WTC11 (cell line): ENCODE measurements at regions of chr11 and their contacts with region 1.

Region 1: GRCh38 chr11:60913793-60914632 is at the start of gene TMEM109:
- DNase-seq: peak; percentile 85
- ATAC-seq: peak; percentile 71
- H3K4me3 Mint-ChIP-seq: peak within 1 kb of the TSS; percentile 94
- H3K27ac Mint-ChIP-seq: peak within 1 kb of the TSS; percentile 99
- H3K4me1 Mint-ChIP-seq: peaks cover 49% of the 10 kb centered on the region
- H3K27me3 Mint-ChIP-seq: peaks cover 34% of the 10 kb centered on the region
- CTCF ChIP-seq: no peak
- total RNA-seq, gene TMEM109: 24.1 to 26.8 TPM (median 25.1 TPM) in 3 replicates

Region 2: DNA sequence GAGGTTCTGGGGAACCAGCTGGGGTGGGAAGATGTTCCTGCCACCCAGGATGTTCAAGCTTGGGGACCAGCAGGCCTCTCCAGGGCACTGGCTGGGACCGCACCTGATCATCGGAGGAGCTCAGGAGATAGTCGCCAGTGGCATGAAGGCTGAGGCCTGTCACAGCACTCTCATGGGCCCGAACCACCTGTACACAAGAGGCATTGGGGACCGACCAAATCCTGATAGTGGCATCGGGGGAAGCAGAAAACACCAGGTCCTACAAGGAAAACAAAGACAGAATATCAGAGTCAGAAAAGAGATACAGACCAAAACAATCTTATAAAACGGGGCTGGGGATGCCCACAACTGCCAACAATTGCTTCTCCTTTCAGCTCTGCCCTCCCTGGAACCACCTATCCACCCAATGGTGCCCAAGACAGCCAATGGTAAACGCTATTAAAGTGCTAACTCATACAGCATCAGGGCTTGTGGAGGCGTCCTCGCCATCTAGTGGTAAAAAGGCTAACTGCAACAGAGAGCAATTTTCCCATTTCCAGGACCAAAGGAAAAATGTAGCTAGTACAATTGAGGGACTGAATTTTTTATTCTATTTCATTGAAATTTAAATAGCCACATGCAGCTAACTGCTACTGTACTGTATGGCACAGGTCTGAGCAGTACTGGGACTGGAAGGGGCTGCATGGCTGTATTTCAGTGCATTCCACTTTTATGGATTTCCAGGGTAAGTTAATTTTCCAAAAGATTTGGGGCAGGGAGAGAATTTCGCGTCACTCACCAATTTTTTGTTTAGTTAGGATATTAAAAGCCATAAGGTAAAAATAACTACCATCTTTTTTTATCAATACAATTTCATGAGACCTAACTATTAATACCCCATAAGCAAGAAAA is 14.7 kb before region 1 on chr11:
- CTCF ChIA-PET with region 1: interaction called, 51 read pairs
- POLR2A ChIA-PET with region 1: no interaction called
- DNase-seq: peak; percentile 38
- ATAC-seq: peak; percentile 79
- H3K4me3 Mint-ChIP-seq: no peak overlapping the region
- H3K27ac Mint-ChIP-seq: no peak overlapping the region; the same call in 1 of the 2 replicates
- H3K4me1 Mint-ChIP-seq: peaks cover 4% of the 10 kb centered on the region
- H3K27me3 Mint-ChIP-seq: no peaks in the 10 kb centered on the region
- CTCF ChIP-seq: peak; percentile 80

Region 3: DNA sequence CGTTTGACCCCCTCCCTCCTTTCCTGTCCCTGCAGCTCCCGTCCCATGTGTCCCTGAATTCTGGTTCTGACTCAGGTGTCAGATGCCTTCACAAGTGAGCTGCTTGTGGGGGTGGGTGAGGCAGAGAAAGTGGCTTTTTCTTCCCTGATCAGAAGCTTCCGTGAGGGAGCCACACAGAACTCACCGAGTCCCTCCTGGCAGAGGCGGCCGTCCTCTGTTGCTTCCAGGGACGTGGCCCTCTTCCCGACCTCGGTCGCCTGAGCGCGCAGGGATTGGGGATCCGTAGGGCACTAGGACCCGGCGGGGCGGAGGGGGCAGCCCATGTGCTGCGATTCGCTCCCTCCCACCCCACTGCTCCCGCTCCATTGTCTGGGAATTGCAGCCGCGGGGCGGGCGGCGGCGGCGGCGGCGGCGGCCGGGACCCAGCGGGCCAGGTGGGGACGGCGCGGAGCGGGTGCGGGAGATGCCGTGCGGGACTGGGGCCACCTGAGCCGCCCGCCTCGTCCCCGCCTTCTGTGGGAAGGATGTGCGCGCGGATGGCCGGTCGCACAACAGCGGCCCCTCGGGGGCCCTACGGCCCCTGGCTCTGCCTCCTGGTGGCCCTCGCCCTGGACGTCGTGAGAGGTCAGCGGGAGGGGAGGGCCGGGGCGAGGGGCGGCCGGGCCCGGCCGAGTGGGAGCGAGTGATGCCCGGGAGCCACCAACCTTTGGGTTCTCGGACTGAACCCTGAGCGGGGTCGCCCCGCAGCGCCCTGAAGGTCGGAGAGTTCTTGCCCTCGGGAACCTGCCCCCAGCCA is 10.3 kb after region 1 on chr11 and contains the start of gene TMEM132A:
- CTCF ChIA-PET with region 1: interaction called, 7 read pairs
- POLR2A ChIA-PET with region 1: interaction called, 11 read pairs
- DNase-seq: peak; percentile 85
- ATAC-seq: peak; percentile 83
- H3K4me3 Mint-ChIP-seq: peak within 1 kb of the TSS; percentile 88
- H3K27ac Mint-ChIP-seq: no peak within 1 kb of the TSS
- H3K4me1 Mint-ChIP-seq: peaks cover 20% of the 10 kb centered on the region
- H3K27me3 Mint-ChIP-seq: no peaks in the 10 kb centered on the region; the same call in 1 of the 2 replicates
- CTCF ChIP-seq: no peak
- total RNA-seq, gene TMEM132A: 110 to 114 TPM (median 114 TPM) in 3 replicates